Sciatic nerve (tissue), 2 donors: ENCODE measurements at regions of chr2 and their contacts with region 1.

Region 1: DNA sequence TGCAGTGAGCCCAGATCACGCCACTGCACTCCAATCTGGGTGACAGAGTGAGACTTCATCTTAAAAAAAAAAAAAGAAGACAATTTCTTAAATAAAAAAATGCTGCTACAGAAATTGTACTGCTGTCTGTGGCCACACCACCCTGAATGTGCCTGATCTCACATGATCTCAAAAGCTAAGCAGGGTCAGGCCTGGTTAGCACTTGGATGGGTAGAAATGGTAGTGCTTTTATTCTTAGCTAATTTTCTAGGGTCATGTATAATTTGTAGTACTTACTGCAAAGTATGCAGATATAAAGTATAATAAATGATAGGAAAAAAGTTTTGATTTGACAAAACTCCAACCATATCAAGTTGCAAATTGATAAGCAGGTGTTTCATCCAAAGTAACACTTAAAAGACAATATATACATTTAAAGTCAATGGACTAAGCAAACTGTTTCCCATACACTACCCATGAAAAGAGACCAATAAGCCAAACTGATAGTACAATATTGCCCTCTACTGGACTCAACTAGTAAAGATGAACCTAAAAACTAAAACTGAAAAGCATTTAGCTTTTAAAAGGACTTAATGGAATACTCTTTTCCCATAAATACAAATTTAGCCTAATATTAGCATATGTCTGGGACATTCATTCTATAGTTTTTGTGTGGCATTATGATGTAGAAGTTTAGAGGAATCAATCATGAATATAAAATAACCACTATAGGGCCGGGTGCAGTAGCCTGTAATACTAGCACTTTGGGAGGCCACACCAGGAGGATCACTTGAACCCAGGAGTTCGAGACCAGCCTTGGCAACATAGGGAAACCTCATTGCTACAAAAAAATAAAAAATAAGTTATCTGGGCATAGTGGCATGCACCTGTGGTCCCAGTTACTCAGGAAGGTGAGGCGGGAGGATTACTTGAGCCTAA is 18.6 kb upstream of the PEX13 start:
- DNase-seq: no peak
- ATAC-seq: peak; percentile 53

Region 2: DNA sequence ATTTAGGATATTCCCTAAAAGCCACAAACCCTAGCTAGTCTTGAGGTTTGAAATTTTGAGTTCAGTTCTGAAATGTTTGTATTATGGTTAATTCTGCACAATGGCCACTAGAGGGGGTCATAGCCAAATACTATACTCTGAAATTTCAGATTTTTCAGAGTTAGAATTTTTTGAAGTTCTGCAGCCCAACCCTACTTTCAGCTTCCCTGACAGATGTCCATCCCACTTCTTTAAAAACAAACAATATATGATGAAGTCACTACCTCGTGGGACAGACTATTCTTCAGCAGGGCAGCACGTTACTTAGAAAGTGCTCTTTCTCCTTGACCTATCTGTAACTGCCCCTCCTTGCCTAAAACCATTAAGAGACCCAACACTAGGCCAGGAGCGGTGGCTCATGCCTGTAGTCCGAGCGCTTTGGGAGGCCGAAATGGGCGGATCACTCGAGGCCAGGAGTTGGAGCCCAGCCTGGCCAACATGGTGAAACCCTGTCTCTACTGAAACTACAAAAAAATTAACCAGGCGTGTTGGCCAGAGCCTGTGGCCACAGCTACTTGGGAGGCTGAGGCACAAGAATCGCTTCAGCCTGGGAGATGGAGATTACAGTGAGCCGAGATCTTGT is 291.0 kb before region 1 on chr2:
- intact Hi-C with region 1: loop called (anchors 5 kb)
- DNase-seq: no peak
- ATAC-seq: peak; percentile 59

Region 3: DNA sequence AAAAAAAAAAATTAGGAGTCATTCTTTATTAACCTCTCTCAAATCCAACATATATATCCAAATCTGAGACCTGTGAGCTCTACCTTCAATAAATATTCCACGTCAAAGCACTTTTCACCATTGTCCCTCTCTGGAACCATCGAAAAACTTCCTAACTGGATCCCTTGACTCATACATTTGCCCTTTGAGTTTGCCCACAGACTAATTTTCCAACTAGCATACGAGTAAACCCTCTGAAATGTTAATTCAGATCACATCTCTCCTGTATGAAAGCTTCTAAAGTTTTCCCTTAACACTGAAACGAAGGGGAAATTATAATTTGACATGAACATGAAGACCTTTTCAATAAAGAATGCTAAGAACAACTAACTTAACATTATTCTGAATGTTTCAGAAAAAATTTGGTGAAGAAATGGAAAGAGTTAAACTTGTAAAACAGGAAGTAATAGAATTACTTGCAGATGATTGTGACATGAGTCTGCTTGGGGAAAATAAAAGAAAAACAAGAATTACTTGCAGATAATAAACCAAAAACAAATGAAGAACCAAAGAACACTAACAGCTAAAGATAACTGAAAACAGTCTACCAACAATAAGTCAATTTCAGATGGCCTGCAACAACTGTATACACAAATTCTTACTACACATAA is 273.7 kb after region 1 on chr2:
- intact Hi-C with region 1: no loop called
- DNase-seq: no peak
- ATAC-seq: no peak